Activated CD8-positive, alpha-beta T cell treated with anti-CD3 and anti-CD28 coated beads for 36 hours (primary cell): ENCODE measurements at regions of chr1 and their contacts with region 1.

Region 1: DNA sequence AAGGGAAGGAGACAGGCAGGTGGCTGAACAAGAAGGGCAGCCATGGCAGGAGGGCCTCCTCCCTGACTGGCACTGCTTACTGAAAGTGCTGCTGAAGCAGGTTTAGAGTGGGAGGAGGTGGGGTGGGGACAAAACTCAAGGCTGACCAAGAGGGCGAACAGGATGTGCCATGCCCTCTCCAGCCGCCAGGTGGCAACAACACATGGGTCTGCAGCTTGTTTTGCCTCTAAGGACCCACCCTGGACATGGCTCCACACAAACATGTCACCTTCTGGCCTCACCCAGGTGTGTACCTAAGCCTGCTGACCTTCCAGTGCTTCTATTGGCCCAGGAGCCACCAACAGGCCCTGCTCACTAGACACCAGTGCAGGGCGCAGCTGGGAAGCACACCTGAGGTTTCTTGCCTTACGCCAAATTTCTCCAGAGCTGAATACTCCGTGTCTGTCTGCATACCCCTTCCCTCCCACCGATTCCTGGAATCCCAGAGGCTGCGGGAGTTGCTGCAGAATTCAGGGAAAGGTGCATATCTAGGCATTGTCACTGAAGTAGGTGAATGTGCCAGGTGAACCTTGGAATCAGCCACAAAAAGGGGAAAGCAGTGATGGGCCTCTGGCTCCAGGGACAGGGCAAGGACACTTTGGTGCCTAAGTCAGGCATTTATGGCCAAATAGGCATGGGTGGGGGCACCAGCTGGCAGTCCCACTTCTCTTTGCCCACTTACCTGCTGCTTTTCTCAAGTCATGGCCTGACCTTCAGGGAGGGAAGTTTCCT is 5.3 kb downstream of the PSRC1 start:
- DNase-seq: peak; percentile 86
- ATAC-seq: peak; percentile 97
- H3K4me3 Mint-ChIP-seq: no peak overlapping the region
- H3K27ac Mint-ChIP-seq: no peak overlapping the region
- H3K4me1 Mint-ChIP-seq: peaks cover 6% of the 10 kb centered on the region
- H3K27me3 Mint-ChIP-seq: no peaks in the 10 kb centered on the region
- CTCF ChIP-seq: peak; percentile 88

Region 2: DNA sequence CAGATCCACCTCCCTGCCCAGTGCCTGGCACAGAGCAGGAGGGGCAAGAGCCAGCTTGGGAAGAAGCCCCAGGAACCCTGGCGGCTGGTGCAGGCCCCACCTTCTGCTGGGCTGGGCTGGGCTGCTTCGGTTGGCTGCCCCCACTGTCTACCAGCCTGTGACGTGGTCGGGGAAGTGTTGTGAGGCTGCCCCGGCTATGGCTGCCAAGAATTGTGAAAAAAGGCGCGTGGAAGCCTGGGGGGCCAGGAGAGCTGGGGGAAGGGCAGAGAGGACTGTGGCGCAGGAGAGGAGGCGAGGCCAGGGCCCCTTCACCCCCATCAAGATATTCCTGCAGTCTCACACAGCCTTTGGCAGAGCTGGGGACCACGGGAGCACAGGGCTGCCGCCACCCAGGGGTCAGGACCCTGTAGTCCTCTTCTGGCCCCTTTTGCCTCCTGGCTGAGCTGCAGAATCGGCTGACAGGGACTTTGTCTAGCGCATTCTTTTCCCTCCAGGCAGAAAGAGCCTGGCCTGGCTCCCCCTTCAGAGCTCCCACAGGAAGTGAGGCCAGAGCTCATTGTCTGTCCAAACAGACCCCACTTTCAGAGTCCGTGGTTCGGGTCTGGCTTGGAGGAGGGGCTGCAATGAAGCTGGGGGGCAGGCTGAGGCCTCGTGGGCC is 24.0 kb before region 1 on chr1:
- CTCF ChIA-PET with region 1: interaction called, 14 read pairs
- POLR2A ChIA-PET with region 1: no interaction called
- intact Hi-C with region 1: no loop called
- DNase-seq: no peak
- ATAC-seq: no peak
- H3K4me3 Mint-ChIP-seq: no peak overlapping the region
- H3K27ac Mint-ChIP-seq: no peak overlapping the region
- H3K4me1 Mint-ChIP-seq: peaks cover 11% of the 10 kb centered on the region
- H3K27me3 Mint-ChIP-seq: no peaks in the 10 kb centered on the region
- CTCF ChIP-seq: no peak

Region 3: DNA sequence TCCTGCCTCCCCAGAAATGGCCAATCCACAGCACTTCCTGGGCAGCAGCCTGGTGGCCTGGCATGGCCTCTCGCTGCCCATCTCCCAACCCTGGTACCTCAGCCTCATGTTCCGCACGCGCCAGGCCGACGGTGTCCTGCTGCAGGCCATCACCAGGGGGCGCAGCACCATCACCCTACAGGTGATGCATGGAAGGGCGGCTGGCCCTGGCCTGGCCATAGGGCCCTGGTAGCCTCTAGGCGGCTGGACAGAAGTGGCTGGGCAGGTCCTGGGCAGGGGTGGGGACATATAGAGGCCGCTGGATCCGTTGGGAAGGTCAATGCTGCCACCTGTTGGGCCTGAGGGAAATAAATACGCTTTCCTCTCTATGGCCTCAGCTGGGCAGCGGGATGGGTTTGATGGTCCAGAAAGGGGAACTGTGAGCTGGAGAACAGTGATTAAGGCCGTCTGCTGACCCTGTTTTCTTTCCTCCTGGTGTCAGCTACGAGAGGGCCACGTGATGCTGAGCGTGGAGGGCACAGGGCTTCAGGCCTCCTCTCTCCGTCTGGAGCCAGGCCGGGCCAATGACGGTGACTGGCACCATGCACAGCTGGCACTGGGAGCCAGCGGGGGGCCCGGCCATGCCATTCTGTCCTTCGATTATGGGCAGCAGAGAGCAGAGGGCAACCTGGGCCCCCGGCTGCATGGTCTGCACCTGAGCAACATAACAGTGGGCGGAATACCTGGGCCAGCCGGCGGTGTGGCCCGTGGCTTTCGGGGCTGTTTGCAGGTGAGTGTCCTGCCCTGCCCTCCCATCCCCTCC is 13.8 kb before region 1 on chr1:
- CTCF ChIA-PET with region 1: interaction called, 18 read pairs
- POLR2A ChIA-PET with region 1: no interaction called
- intact Hi-C with region 1: no loop called
- DNase-seq: peak; percentile 89
- ATAC-seq: peak; percentile 99
- H3K4me3 Mint-ChIP-seq: peak overlapping the region; percentile 12
- H3K27ac Mint-ChIP-seq: peak overlapping the region; percentile 76
- H3K4me1 Mint-ChIP-seq: peaks cover 2% of the 10 kb centered on the region
- H3K27me3 Mint-ChIP-seq: no peaks in the 10 kb centered on the region
- CTCF ChIP-seq: peak; percentile 97

Region 4: DNA sequence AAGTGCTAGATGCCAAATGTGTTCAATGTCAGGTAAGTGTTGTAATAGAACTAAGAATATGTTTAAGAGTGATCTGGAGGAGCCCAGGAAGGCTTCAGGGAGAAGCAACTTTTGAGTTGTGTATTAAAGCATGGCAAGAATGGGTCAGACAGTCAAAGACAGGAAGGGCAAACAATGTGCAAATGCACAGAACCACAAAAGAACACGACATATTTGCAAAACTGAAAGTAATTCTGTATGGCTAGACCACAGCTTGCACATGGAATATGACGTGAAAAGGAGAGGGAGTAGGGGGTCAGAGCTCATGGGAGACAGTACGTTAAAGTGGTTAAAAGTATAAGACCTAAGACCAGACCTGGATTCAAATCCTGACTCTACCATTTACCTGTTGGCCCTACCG is 127.2 kb after region 1 on chr1:
- CTCF ChIA-PET with region 1: interaction called, 123 read pairs
- POLR2A ChIA-PET with region 1: no interaction called
- intact Hi-C with region 1: no loop called
- DNase-seq: peak; percentile 11
- ATAC-seq: peak; percentile 76
- H3K4me3 Mint-ChIP-seq: no peak overlapping the region
- H3K27ac Mint-ChIP-seq: peak overlapping the region; percentile 81
- H3K4me1 Mint-ChIP-seq: peaks cover 23% of the 10 kb centered on the region
- H3K27me3 Mint-ChIP-seq: no peaks in the 10 kb centered on the region
- CTCF ChIP-seq: no peak